Activated CD4-positive, alpha-beta memory T cell treated with anti-CD3 and anti-CD28 coated beads for 36 hours (primary cell): ENCODE measurements at regions of chr10 and their contacts with region 1.

Region 1: DNA sequence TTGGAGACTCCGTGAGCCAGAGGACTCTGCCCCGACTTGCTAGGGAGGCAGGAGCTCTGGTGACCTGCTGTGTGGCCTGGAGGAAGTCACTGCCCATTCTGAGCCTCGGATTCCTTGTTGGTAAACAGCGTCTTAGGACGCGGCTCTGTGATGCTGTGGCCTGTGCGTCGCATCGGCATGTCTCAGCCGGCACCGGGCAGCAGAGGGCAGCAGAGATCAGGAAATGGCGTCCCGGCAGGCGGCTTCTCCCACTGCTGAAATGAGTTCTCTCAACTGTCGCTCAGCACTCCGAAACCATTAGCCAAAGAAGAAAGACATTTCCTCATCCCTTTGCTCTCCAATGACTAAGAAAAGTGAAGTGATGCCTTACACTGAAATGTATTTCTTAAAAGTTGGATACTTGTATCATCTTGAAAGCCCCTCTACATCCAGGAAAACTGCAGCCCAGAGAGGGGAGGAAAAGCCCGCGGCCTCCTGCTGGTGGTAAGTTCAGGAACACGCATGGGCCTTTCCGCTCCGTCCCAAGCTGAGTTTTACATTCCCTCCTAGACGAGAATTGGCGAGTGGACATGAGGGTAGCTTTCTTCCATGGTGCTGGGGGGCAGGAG is 91.7 kb downstream of the WDR11 start:
- DNase-seq: peak; percentile 85
- H3K4me3 Mint-ChIP-seq: no peak overlapping the region
- H3K27ac Mint-ChIP-seq: no peak overlapping the region
- H3K4me1 Mint-ChIP-seq: peaks cover 5% of the 10 kb centered on the region
- H3K27me3 Mint-ChIP-seq: peaks cover 10% of the 10 kb centered on the region

Region 2: DNA sequence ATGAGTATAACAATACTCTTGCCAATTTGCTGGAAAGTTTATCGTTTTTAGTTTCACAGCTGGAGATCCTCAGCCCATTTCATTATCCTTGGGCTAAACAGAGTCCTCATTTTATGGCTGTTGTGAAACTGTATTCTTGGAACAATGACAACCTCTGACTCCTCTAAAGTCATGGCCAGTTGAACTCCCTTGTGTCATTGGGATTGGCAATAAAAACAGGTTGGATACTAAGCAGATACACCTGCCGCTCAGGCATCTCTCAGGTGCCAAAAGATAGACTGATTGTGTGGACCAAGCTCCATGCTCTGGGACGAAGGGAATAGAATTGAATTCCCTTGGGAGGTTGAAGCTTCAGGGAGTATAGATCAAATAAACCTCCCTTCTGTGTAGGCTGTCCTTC is 90.5 kb after region 1 on chr10:
- CTCF ChIA-PET with region 1: no interaction called
- POLR2A ChIA-PET with region 1: no interaction called
- intact Hi-C with region 1: no loop called
- DNase-seq: no peak
- H3K4me3 Mint-ChIP-seq: no peak overlapping the region
- H3K27ac Mint-ChIP-seq: no peak overlapping the region
- H3K4me1 Mint-ChIP-seq: no peaks in the 10 kb centered on the region
- H3K27me3 Mint-ChIP-seq: peaks cover 3% of the 10 kb centered on the region

Region 3: GRCh38 chr10:121734589-121735045 is 791.7 kb after region 1 on chr10:
- CTCF ChIA-PET with region 1: interaction called, 3 read pairs
- POLR2A ChIA-PET with region 1: no interaction called
- intact Hi-C with region 1: loop called (anchors 1 kb)
- DNase-seq: no peak
- H3K4me3 Mint-ChIP-seq: no peak overlapping the region
- H3K27ac Mint-ChIP-seq: no peak overlapping the region
- H3K4me1 Mint-ChIP-seq: peaks cover 6% of the 10 kb centered on the region
- H3K27me3 Mint-ChIP-seq: peaks cover 36% of the 10 kb centered on the region

Region 4: GRCh38 chr10:121900443-121901174 is 957.7 kb after region 1 on chr10:
- CTCF ChIA-PET with region 1: interaction called, 8 read pairs
- POLR2A ChIA-PET with region 1: no interaction called
- intact Hi-C with region 1: loop called (anchors 1 kb)
- DNase-seq: no peak
- H3K4me3 Mint-ChIP-seq: no peak overlapping the region
- H3K27ac Mint-ChIP-seq: no peak overlapping the region
- H3K4me1 Mint-ChIP-seq: no peaks in the 10 kb centered on the region
- H3K27me3 Mint-ChIP-seq: no peaks in the 10 kb centered on the region